ENCODE measurements at regions of chr1 and their contacts with region 1.

Region 1: DNA sequence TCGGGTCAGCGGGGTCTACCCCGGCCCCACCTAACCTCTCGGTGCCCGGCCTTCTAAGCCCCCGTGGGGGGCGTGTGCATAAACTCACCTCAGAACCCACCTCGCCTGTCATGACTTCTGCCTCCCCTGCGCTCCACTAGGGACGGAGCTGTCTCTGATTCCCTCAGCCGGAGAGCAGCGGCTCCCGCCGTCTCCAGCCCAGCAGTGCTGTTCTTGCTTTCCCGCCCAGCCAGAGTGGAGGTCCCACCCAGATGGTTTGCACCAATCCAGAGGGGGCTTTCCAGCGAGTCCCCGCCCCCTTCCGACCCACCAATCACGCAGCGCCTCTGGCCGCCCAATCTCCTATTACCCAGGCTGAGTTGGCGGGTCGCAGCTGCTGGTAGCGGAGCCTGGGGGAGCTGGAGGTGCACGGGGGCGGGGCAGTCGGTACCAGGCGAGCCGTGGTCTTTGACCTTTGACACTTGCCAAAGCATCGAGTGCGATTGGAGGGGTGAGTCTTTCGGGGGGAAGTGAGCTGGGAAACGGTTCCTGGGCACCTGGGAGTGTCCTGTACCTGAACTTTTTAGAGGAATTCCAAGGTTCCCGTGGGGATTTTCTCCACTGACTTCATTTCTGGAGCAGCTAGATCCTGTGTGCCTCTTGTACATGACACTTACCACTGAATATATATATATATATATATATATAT is at the start of gene CLSPN:
- DNase-seq: peak; percentile 87 to 96
- H3K4me3 ChIP-seq: peak within 1 kb of the TSS; percentile 60 to 93
- H3K27ac ChIP-seq: peak within 1 kb of the TSS; percentile 20 to 73
- H3K4me1 ChIP-seq: peaks cover 0 to 4% of the 10 kb centered on the region in 2 donors
- H3K27me3 ChIP-seq: no peaks in the 10 kb centered on the region
- CTCF ChIP-seq: no peak
- total RNA-seq, gene CLSPN: not detected

Region 2: DNA sequence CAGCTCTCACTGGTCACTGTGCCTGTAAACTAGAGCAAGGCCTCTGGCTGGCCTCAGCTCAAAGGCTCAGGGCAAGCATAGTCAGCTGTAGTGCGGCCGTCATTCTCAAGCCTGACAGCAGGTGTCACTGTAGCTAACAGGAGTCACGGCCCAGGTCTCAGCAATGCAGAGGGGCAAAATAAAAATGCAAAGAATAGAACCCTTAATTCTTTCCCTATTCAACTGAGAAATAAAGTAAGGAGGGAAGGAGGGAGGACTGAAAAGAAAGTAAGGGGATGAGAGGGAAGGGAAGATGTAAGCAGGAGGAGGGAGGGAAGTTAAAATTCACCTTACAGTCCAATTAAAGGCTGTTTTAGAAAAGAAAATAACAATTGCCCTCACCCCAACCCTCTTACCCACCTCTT is 318.8 kb before region 1 on chr1:
- intact Hi-C with region 1: loop called (anchors 5 kb)
- DNase-seq: peak; percentile 19 to 88
- H3K4me3 ChIP-seq: no peak overlapping the region
- H3K27ac ChIP-seq: no peak overlapping the region
- H3K4me1 ChIP-seq: peaks cover 9 to 16% of the 10 kb centered on the region in 2 donors
- H3K27me3 ChIP-seq: no peaks in the 10 kb centered on the region
- CTCF ChIP-seq: peak; percentile 75 to 88 (median 85)

Region 3: GRCh38 chr1:35564037-35564883 is 205.6 kb before region 1 on chr1:
- intact Hi-C with region 1: loop called (anchors 2 kb)
- DNase-seq: peak in 1 of 2 donors; percentile 83
- H3K4me3 ChIP-seq: no peak overlapping the region
- H3K27ac ChIP-seq: no peak overlapping the region
- H3K4me1 ChIP-seq: peaks cover 2 to 16% of the 10 kb centered on the region in 2 donors
- H3K27me3 ChIP-seq: no peaks in the 10 kb centered on the region
- CTCF ChIP-seq: peak; percentile 38 to 77 (median 69)

Region 4: GRCh38 chr1:35605882-35606182 is 164.1 kb before region 1 on chr1:
- intact Hi-C with region 1: no loop called
- DNase-seq: no peak
- H3K4me3 ChIP-seq: no peak overlapping the region
- H3K27ac ChIP-seq: no peak overlapping the region
- H3K4me1 ChIP-seq: no peaks in the 10 kb centered on the region
- H3K27me3 ChIP-seq: no peaks in the 10 kb centered on the region
- CTCF ChIP-seq: no peak

Region 5: DNA sequence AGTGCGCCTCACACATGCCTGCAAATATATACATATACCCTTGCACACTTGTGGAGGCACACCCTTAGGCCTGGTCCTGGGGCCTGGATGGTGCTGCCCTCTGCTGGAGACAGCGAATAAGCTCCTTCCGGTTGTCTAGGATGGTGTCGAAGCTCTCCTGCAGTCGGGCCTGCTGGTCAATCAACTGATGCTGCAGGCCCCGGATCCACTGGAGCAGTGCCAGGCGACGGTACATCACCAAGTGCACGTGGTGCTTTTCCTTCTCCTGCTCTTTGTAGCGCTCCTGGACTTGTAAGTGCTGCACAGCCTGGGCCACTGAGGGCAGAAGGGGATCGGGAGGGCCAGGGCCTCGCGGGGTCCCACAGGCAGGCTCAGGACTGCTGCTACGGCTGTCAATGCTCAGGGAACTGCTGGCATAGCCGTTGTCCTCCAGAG is 54.3 kb before region 1 on chr1:
- intact Hi-C with region 1: loop called (anchors 5 kb)
- DNase-seq: peak; percentile 15 to 71
- H3K4me3 ChIP-seq: peak overlapping the region; percentile 5 to 42
- H3K27ac ChIP-seq: no peak overlapping the region
- H3K4me1 ChIP-seq: peaks cover 17 to 26% of the 10 kb centered on the region in 2 donors
- H3K27me3 ChIP-seq: no peaks in the 10 kb centered on the region
- CTCF ChIP-seq: peak; percentile 59 to 79 (median 68)

Measured in ascending aorta (tissue), 2 donors.